Esophagus squamous epithelium (tissue), 5 donors: ENCODE measurements at regions of chr1 and their contacts with region 1.

Region 1: GRCh38 chr1:36703526-36704208 is 221.0 kb upstream of the CSF3R start:
- DNase-seq: no peak
- H3K4me3 ChIP-seq: no peak overlapping the region
- H3K27ac ChIP-seq: no peak overlapping the region
- H3K4me1 ChIP-seq: peaks cover 0 to 4% (median 0%) of the 10 kb centered on the region in 3 donors
- H3K27me3 ChIP-seq: peaks cover 0 to 81% (median 0%) of the 10 kb centered on the region in 4 donors
- CTCF ChIP-seq: peak; percentile 56 to 87 (median 74)
- POLR2A ChIP-seq: no peak

Region 2: DNA sequence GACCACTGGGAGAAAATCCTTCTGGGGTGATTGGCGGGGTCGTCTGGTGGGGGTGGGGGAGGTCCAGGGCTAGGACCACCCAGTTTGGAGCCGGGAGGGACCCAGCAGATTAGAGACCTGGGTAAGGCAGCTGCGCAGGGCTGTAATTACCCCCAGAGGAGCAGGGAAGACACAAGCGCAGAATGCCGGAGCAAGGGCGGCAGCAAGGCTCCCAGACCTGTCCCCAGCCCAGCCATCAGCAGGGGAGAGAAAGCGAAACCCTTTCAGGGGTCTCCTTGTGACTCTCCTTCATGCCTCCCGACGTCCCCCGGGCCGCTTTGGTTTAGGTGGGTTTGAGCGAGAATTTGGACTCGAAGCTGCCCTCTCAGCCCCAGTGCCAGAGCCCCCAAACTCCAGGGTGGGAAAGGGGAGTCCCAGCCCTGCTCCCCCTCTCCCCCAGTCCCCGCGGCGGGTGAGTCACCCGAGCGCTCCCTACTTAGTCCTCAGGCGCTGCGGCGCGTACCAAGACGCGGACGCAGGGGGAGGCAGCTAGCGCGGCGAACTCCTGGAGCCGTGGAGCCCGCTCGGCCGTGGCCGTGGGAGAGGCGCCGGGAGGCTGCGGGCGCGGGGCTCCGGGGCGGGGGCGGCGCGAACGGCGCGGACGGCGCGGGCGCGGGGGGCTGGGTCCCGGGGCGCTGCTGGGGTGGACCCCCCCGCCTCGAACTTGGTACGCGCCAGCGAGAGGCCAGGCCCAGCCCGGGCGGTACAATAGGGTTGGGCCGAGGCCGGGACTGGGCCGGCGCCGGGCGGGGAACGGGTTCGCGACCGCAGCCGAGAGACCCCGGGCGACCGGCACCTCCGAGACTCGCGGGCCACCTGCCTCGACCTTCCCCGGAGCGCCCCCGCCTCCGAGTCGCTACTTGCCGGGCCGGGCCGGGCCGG is 548.0 kb before region 1 on chr1 and contains the start of gene MAP7D1:
- intact Hi-C with region 1: no loop called
- DNase-seq: peak; percentile 42
- H3K4me3 ChIP-seq: peak within 1 kb of the TSS; percentile 86 to 100 (median 96)
- H3K27ac ChIP-seq: peak within 1 kb of the TSS; percentile 95 to 100 (median 98)
- H3K4me1 ChIP-seq: peaks cover 49 to 76% (median 56%) of the 10 kb centered on the region in 3 donors
- H3K27me3 ChIP-seq: no peaks in the 10 kb centered on the region
- CTCF ChIP-seq: no peak
- POLR2A ChIP-seq: peak; percentile 16 to 95 (median 71)
- total RNA-seq, gene MAP7D1: 59.4 to 180 (median 92.9) TPM

Region 3: GRCh38 chr1:36718498-36718897 is 14.8 kb after region 1 on chr1:
- intact Hi-C with region 1: no loop called
- DNase-seq: no peak
- H3K4me3 ChIP-seq: no peak overlapping the region
- H3K27ac ChIP-seq: no peak overlapping the region
- H3K4me1 ChIP-seq: no peaks in the 10 kb centered on the region
- H3K27me3 ChIP-seq: peaks cover 0 to 67% (median 0%) of the 10 kb centered on the region in 4 donors
- CTCF ChIP-seq: no peak
- POLR2A ChIP-seq: no peak

Region 4: GRCh38 chr1:37434292-37434907 is 730.7 kb after region 1 on chr1:
- intact Hi-C with region 1: loop called (anchors 10 kb)
- DNase-seq: no peak
- H3K4me3 ChIP-seq: no peak overlapping the region
- H3K27ac ChIP-seq: no peak overlapping the region
- H3K4me1 ChIP-seq: no peaks in the 10 kb centered on the region
- H3K27me3 ChIP-seq: peaks cover 0 to 79% (median 0%) of the 10 kb centered on the region in 4 donors
- CTCF ChIP-seq: peak; percentile 77 to 89 (median 82)
- POLR2A ChIP-seq: no peak